H1 (cell line): ENCODE measurements at regions of chr6 and their contacts with region 1.

Region 1: GRCh38 chr6:89281779-89282246 is 33.3 kb downstream of the GABRR2 start:
- DNase-seq: peak; percentile 49 to 81
- H3K4me3 ChIP-seq: no peak overlapping the region
- H3K27ac ChIP-seq: no peak overlapping the region
- H3K4me1 ChIP-seq: peaks cover 0 to 11% (median 2%) of the 10 kb centered on the region in 4 experiments; a peak in 4 of 7 replicates
- H3K27me3 ChIP-seq: peaks cover 0 to 1% (median 0%) of the 10 kb centered on the region in 4 experiments; a peak in 1 of 7 replicates
- CTCF ChIP-seq: peak; percentile 67 to 98 (median 96)
- EP300 ChIP-seq: no peak
- POLR2A ChIP-seq: no peak
- RAD21 ChIP-seq: peak; percentile 55 to 63

Region 2: DNA sequence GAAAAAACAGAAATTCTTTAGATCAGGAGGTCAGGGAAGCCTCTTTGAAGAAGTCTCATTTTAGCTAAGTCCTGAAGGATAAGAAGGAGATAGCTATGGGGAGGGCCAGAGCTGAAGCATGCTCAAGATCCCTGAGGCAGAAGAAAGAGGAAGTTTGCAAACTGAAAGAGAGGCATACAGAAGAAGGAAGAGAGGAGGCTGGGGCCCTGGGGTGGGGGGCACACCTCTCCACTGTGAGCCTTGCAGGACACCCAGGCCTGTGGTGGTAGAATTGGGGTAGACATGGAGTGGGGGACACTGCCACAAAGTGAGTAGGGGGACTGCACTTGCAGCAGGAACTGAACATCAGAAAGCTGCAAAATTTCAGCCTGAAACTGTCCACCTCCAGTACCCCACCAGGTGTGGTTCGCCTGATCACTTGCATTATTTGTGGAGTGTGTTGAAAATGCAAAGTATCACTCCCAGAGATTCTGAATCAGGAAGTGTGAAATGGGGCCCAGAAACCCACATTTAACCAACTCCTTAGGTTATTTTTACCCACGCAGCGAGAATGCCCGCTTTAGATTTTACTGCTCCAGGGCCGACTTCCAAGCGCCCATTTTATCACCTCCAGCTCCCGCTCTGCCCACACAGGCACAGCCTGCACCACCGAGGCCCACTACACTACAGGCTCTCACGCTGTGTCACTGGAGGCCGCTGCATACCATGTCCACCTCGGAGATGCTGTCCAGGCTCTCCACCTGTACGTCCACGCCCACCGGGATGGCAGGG is 10.7 kb before region 1 on chr6:
- CTCF ChIA-PET with region 1: interaction called, 57 read pairs
- POLR2A ChIA-PET with region 1: no interaction called
- DNase-seq: peak in 1 of 2 experiments; percentile 37
- H3K4me3 ChIP-seq: no peak overlapping the region
- H3K27ac ChIP-seq: no peak overlapping the region
- H3K4me1 ChIP-seq: no peaks in the 10 kb centered on the region
- H3K27me3 ChIP-seq: no peaks in the 10 kb centered on the region
- CTCF ChIP-seq: no peak
- EP300 ChIP-seq: no peak
- POLR2A ChIP-seq: no peak
- RAD21 ChIP-seq: no peak

Region 3: DNA sequence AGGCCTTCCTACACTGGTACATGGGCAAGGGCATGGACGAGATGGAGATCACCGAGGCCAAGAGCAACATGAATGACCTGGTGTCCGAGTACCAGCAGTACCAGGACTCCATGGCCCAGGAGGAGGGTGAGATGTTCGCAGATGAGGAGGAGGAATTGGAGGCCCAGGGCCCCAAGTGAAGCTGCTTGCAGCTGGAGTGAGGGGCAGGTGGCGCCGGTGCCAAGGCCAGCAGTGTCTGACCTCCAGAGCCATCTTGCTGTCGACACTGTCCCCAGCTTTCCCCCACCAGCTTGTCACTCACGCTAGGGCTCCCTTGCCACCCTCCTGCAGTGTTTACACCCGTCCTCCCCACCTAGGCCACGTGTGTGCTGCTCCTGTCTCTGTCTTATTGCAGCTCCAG is 21.1 kb after region 1 on chr6:
- CTCF ChIA-PET with region 1: interaction called, 11 read pairs
- POLR2A ChIA-PET with region 1: interaction called, 3 read pairs
- DNase-seq: no peak
- H3K4me3 ChIP-seq: no peak overlapping the region
- H3K27ac ChIP-seq: no peak overlapping the region
- H3K4me1 ChIP-seq: peaks cover 0 to 6% (median 0%) of the 10 kb centered on the region in 4 experiments; a peak in 3 of 7 replicates
- H3K27me3 ChIP-seq: no peaks in the 10 kb centered on the region
- CTCF ChIP-seq: no peak
- EP300 ChIP-seq: no peak
- POLR2A ChIP-seq: no peak
- RAD21 ChIP-seq: no peak